HEK293 (cell line): ENCODE measurements at regions of chr20 and their contacts with region 1.

Region 1: DNA sequence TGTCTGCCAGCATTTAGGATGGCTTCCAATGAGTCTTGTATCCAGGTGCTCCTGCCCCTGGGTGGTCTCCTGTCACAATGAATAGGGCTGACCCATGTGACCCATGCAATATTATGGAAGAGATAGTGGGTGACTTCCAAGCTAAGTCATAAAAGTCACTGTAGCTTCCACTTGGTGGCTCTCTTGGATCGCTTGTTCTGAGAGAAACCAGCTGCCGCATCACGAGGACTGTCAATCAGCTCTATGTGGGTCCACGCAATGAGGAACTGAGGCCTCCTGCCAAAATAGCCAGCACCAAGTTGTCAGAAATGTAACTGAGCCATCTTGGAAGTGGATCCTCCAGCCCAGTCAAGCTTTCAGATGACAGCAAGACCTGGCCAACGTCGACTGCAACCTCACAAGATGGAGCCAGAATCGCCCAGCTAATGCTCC is 14.9 kb upstream of the MATN4 start:
- H3K4me3 ChIP-seq: no peak overlapping the region
- H3K27ac ChIP-seq: no peak overlapping the region
- H3K4me1 ChIP-seq: no peaks in the 10 kb centered on the region; the same call in 1 of the 2 replicates
- CTCF ChIP-seq: peak; percentile 35; the same call in 1 of the 2 replicates

Region 2: DNA sequence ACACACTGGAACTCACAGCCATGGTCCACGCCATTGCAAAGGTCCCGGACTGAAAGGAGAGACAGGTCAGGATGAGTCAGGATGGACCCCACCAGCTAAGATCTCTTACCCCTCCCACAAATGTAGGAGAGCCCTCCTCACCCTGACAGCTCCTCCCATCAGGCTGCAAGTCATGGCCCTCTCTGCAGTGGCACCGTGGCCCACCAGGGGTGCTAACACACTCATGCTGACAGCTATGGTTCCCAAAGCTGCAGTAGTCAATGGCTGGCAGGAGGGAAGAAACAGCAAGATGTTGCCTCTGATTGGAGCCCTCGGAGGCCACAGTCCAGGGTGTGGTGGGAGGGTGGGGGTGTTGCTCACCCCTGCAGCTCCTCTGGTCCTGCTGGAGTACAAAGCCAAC is 22.0 kb before region 1 on chr20:
- CTCF ChIA-PET with region 1: interaction called, 13 read pairs
- POLR2A ChIA-PET with region 1: no interaction called
- H3K4me3 ChIP-seq: no peak overlapping the region
- H3K27ac ChIP-seq: no peak overlapping the region
- H3K4me1 ChIP-seq: 0 out of 2 replicates have a peak, but pooled peaks cover 3% of the 10 kb centered on the region
- CTCF ChIP-seq: no peak

Region 3: DNA sequence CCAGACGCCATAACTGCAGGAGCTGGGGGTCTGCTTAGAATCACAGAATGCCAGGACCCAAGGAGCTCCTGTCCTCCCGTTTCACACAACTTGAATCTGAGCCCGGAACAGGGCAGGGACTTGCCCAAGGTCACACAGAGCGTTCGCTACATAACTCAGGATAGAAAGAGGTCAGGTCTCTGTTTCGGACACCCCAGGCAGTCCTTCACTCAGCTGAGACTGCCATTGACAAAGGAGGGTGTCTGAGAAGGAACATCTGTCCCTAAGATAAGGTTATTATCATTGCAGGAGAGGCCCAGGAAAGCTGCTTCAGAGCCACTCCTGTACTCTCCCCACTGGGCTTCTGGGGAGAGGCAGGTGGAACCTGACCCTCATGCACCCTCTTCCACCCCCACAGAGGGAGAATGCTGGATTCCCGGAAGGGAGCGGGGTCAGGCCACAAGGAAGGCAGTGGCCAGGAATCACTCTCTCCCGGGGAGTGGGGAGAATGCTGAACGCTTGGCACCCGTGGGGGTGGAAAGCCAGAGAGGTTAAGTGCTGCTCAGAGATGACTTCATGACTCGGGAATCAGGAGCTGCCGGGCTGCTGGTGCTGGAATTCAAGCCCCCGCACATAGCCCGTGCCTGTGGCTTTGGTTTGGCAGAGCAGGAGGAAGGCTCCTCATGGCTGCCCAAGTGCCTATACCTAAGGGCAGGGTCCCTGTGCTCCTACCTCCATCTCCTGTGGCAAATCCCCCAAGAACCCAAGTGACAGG is 14.6 kb after region 1 on chr20:
- CTCF ChIA-PET with region 1: interaction called, 14 read pairs
- POLR2A ChIA-PET with region 1: interaction called, 3 read pairs
- H3K4me3 ChIP-seq: no peak overlapping the region
- H3K27ac ChIP-seq: no peak overlapping the region
- H3K4me1 ChIP-seq: peaks cover 13% of the 10 kb centered on the region
- CTCF ChIP-seq: no peak

Region 4: GRCh38 chr20:45347936-45348778 is 25.2 kb after region 1 on chr20 and contains the start of gene SDC4:
- CTCF ChIA-PET with region 1: interaction called, 11 read pairs
- POLR2A ChIA-PET with region 1: interaction called, 6 read pairs
- H3K4me3 ChIP-seq: peak within 1 kb of the TSS; percentile 52
- H3K27ac ChIP-seq: peak within 1 kb of the TSS; percentile 45; the same call in 1 of the 2 replicates
- H3K4me1 ChIP-seq: peaks cover 21% of the 10 kb centered on the region
- CTCF ChIP-seq: no peak

Region 5: GRCh38 chr20:45354423-45355208 is 31.6 kb after region 1 on chr20:
- CTCF ChIA-PET with region 1: interaction called, 11 read pairs
- POLR2A ChIA-PET with region 1: no interaction called
- H3K4me3 ChIP-seq: no peak overlapping the region
- H3K27ac ChIP-seq: no peak overlapping the region
- H3K4me1 ChIP-seq: 0 out of 2 replicates have a peak, but pooled peaks cover 2% of the 10 kb centered on the region
- CTCF ChIP-seq: no peak

Region 6: GRCh38 chr20:45362804-45363610 is 40.0 kb after region 1 on chr20 and contains the start of gene SYS1:
- CTCF ChIA-PET with region 1: interaction called, 34 read pairs
- POLR2A ChIA-PET with region 1: interaction called, 12 read pairs
- H3K4me3 ChIP-seq: peak within 1 kb of the TSS; percentile 66
- H3K27ac ChIP-seq: peak within 1 kb of the TSS; percentile 31; the same call in 1 of the 2 replicates
- H3K4me1 ChIP-seq: no peaks in the 10 kb centered on the region; the same call in 1 of the 2 replicates
- CTCF ChIP-seq: peak; percentile 100

Region 7: GRCh38 chr20:45450097-45450818 is 127.3 kb after region 1 on chr20:
- CTCF ChIA-PET with region 1: interaction called, 16 read pairs
- POLR2A ChIA-PET with region 1: no interaction called
- H3K4me3 ChIP-seq: no peak overlapping the region
- H3K27ac ChIP-seq: no peak overlapping the region
- H3K4me1 ChIP-seq: no peaks in the 10 kb centered on the region
- CTCF ChIP-seq: peak; percentile 24; the same call in 1 of the 2 replicates